Thyroid gland (tissue), 4 donors: ENCODE measurements at regions of chr19 and their contacts with region 1.

Region 1: GRCh38 chr19:38263689-38264485 is 486 bp upstream of the SPINT2 start:
- DNase-seq: peak; percentile 97 to 98
- H3K4me3 ChIP-seq: peak overlapping the region in 1 of 3 donors; percentile 71
- H3K27ac ChIP-seq: peak overlapping the region in 1 of 3 donors; percentile 96
- H3K4me1 ChIP-seq: peaks cover 21 to 40% of the 10 kb centered on the region in 2 donors
- H3K27me3 ChIP-seq: no peaks in the 10 kb centered on the region
- CTCF ChIP-seq: no peak
- POLR2A ChIP-seq: no peak

Region 2: DNA sequence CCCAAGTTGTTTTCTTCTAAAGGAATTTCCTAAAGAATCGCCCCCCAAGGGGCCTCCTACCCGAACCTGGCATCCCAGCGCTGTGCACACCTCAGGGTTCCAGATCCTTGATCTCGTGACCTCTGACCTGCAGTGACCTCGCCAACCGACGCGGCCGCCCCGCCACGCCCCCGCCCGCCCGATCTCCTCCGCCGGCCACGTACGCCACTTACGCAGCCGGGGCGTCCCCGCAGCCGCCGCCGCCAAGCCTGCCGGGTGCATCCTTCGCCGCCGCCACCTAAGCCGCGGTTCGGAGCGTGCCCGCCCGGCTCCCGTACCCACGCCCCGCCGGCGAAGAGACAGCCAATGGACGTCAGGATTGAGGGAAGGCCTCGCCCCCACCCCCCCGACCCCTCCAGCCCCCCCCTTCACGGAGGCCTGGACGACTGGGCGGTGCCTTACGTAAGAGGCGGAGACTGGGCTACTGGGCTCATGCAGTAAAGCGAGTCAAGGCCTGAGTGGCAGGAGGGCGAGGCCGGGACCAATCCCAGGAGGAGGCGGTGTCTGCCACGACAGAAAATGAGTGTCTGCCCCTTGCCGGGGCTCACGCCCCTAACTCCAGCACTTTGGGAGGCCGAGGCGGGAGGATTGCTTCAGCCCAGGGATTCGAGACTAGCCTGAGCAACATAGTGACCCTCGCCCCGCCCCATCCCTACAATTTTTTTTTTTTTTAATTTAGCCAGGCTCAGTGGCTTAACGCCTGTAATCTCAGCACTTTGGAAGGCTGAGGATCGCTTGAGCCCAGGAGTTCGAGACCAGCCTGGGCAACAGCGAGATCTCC is 52.0 kb after region 1 on chr19 and contains the start of gene YIF1B:
- intact Hi-C with region 1: loop called (anchors 5 kb)
- DNase-seq: peak; percentile 96 to 97
- H3K4me3 ChIP-seq: peak within 1 kb of the TSS; percentile 10 to 57 (median 43)
- H3K27ac ChIP-seq: peak within 1 kb of the TSS; percentile 72 to 85 (median 77)
- H3K4me1 ChIP-seq: peaks cover 0 to 21% of the 10 kb centered on the region in 2 donors
- H3K27me3 ChIP-seq: no peaks in the 10 kb centered on the region
- CTCF ChIP-seq: no peak
- POLR2A ChIP-seq: peak in 1 of 2 donors; percentile 45
- total RNA-seq, gene YIF1B: 12.9 to 30.9 (median 21.0) TPM